CD14-positive monocyte (primary cell): ENCODE measurements at regions of chr13 and their contacts with region 1.

Region 1: DNA sequence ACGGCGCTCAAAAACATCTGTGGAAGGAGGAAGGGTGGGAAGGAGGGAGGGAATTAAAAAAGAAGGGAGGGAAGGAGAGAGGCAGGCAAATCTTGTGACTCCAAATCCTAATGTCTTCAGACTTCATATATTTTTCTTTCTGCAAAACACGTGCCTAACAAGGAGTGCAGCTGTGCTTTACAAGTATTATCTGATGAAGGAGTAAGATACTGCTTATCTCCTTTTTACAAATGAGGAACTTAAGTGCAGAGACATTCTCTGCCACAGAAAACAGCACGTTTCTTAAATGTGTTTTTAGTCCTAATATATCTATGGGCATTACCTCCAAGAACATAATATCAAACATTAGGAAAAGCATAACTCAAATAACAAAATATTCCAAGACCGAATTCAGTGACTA is 6.5 kb downstream of the FLT3 start:
- DNase-seq: peak in 1 of 3 donors; percentile 29
- H3K4me3 ChIP-seq: peak overlapping the region in 1 of 3 experiments; percentile 66
- H3K4me3 Mint-ChIP-seq: peak overlapping the region in 1 of 2 donors; percentile 65
- H3K27ac ChIP-seq: peak overlapping the region in 1 of 2 donors; percentile 69
- H3K27ac Mint-ChIP-seq: peak overlapping the region in 6 of 7 donors; percentile 48 to 80 (median 72)
- H3K4me1 ChIP-seq: peaks cover 38 to 53% of the 10 kb centered on the region in 2 donors
- H3K4me1 Mint-ChIP-seq: peaks cover 56% of the 10 kb centered on the region
- H3K27me3 ChIP-seq: no peaks in the 10 kb centered on the region
- H3K27me3 Mint-ChIP-seq: peaks cover 0 to 1% (median 0%) of the 10 kb centered on the region in 3 donors
- CTCF ChIP-seq: no peak

Region 2: GRCh38 chr13:28012896-28013295 is 81.0 kb before region 1 on chr13:
- intact Hi-C with region 1: no loop called
- DNase-seq: no peak
- H3K4me3 ChIP-seq: no peak overlapping the region
- H3K4me3 Mint-ChIP-seq: no peak overlapping the region
- H3K27ac ChIP-seq: no peak overlapping the region
- H3K27ac Mint-ChIP-seq: peak overlapping the region in 2 of 7 donors; percentile 13 to 44
- H3K4me1 ChIP-seq: no peaks in the 10 kb centered on the region
- H3K4me1 Mint-ChIP-seq: peaks cover 10% of the 10 kb centered on the region
- H3K27me3 ChIP-seq: no peaks in the 10 kb centered on the region
- H3K27me3 Mint-ChIP-seq: peaks cover 0 to 1% (median 1%) of the 10 kb centered on the region in 3 donors
- CTCF ChIP-seq: no peak

Region 3: DNA sequence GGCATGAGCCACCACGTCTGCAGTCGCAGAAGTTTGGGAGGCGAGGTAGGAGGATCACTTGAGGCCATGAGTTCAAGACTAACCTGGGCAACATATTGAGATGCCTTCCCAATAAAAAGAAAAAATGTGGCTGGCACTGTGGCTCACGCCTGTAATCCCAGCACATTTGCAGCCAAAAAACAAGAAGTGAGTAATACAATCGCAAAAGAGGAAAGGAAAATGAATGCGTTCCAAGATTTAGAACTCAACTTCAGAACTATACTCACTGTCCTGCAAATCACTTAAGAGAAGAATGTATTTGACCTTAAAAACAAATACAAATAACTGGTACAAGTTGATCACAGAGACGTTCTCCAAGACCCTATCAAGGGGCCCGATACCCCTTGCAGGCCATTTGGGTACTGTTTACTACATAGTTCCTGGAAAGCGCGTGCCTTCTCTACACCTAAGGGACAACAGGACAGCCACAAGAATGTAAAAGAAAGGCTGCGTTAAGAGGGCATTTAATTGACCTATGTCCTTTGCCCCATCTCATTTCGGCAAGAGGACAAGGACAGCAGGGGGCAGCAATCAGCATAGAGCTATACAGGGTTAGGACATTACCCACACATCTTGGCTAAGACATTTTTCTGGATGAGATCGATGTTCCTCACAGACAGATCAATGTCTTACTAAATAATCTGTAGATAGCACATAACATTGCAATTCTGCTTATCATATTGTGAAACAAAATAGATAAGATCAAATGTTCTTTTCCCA is 34.8 kb before region 1 on chr13:
- intact Hi-C with region 1: loop called in 1 of 2 experiments (anchors 5 kb)
- DNase-seq: peak in 2 of 3 donors; percentile 22 to 29
- H3K4me3 ChIP-seq: peak overlapping the region in 1 of 3 experiments; percentile 18
- H3K4me3 Mint-ChIP-seq: peak overlapping the region in 1 of 2 donors; percentile 57
- H3K27ac ChIP-seq: no peak overlapping the region
- H3K27ac Mint-ChIP-seq: peak overlapping the region in 3 of 7 donors; percentile 8 to 69 (median 53)
- H3K4me1 ChIP-seq: peaks cover 20 to 26% of the 10 kb centered on the region in 2 donors
- H3K4me1 Mint-ChIP-seq: peaks cover 32% of the 10 kb centered on the region
- H3K27me3 ChIP-seq: no peaks in the 10 kb centered on the region
- H3K27me3 Mint-ChIP-seq: peaks cover 0 to 2% (median 0%) of the 10 kb centered on the region in 3 donors
- CTCF ChIP-seq: peak; percentile 30